Cardiac septum (tissue), 1 donor: ENCODE measurements at regions of chr2 and their contacts with region 1.

Region 1: DNA sequence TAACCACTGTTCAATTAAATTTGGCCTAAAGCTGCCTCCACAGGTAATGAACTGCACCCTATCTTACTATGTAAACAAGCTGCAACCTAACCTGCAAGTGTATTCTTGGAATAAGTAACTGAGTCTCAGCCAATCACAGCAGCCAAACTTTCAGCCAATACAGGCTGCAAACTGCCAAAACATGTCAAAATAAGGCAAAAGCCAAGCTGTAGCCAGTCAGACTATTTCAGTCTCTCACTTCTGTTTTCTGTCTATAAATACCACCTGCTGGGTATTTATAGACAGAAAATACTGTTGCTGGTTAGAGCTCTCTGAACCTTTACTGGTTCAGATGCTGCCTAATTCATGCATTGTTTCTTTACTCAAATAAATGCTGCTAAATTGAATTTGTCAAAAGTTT is 14.3 kb downstream of the C2orf76 start:
- DNase-seq: no peak

Region 2: DNA sequence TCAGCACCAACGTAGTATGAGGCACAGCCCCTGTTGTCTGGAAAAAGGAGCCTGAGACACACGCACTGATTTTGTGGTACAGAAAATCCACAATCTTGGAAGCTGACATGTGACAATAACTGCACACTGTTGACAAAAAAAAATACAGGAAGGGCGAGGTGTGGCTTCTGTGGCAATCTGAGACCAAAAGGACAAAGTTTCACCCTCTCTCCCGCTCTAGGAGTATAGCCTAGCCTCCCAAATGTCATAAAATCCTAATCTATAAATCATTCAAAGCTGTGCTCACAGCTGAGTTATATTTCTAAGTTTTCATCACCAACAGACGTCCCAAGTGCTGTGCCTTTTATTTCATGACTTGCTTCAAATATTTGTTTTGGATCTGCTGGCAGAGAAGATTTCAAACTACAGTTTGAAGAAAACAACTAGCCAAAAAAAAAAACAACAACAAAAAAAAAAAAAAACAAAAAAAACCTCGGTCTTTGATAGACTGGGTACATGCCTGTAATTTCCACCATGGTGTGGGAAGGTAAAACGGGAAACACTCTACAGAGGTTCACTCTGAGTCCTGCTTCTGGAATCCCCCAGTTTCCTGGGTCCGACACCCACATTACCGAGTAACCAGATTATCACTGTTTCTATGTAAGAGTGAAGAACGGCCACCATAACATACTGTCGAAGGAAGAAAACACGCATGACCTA is 46.7 kb before region 1 on chr2:
- intact Hi-C with region 1: loop called (anchors 5 kb)
- DNase-seq: no peak

Region 3: GRCh38 chr2:119387381-119388129 is 35.2 kb after region 1 on chr2:
- intact Hi-C with region 1: no loop called
- DNase-seq: peak; percentile 76

Region 4: GRCh38 chr2:119441376-119442225 is 89.2 kb after region 1 on chr2:
- intact Hi-C with region 1: no loop called
- DNase-seq: no peak